CD14-positive monocyte (primary cell): ENCODE measurements at regions of chr12 and their contacts with region 1.

Region 1: GRCh38 chr12:120580787-120581723 is at the start of gene POP5:
- DNase-seq: peak; percentile 96 to 99 (median 96)
- H3K4me3 ChIP-seq: peak within 1 kb of the TSS; percentile 68 to 89 (median 84)
- H3K4me3 Mint-ChIP-seq: peak within 1 kb of the TSS; percentile 91 to 96
- H3K27ac ChIP-seq: peak within 1 kb of the TSS; percentile 36 to 76
- H3K27ac Mint-ChIP-seq: peak within 1 kb of the TSS; percentile 79 to 95 (median 91)
- H3K4me1 ChIP-seq: peaks cover 27 to 42% of the 10 kb centered on the region in 2 donors
- H3K4me1 Mint-ChIP-seq: peaks cover 34% of the 10 kb centered on the region
- H3K27me3 ChIP-seq: peaks cover 3 to 23% of the 10 kb centered on the region in 2 donors
- H3K27me3 Mint-ChIP-seq: peaks cover 23 to 32% (median 25%) of the 10 kb centered on the region in 3 donors
- CTCF ChIP-seq: no peak
- polyA plus RNA-seq, gene POP5: 57.2 to 78.7 (median 61.2) TPM

Region 2: DNA sequence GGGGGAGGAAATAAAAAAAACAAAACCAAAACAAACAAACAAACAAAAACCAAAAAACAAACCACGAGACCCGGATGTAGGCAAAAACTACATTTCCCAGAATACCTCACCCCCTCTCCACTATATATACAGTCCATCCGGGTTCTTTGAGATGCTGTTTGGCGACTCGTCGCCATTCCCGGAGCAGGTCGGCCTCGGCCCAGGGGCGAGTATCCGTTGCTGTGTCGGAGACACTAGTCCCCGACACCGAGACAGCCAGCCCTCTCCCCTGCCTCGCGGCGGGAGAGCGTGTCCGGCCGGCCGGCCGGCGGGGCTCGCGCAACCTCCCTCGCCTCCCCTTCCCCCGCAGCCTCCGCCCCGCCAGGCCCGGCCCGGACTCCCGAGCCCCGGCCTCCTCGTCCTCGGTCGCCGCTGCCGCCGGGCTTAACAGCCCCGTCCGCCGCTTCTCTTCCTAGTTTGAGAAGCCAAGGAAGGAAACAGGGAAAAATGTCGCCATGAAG is 46.8 kb before region 1 on chr12 and contains the start of gene RNF10:
- intact Hi-C with region 1: loop called in 1 of 2 experiments (anchors 5 kb)
- DNase-seq: peak; percentile 83 to 86 (median 83)
- H3K4me3 ChIP-seq: peak within 1 kb of the TSS; percentile 88 to 98 (median 89)
- H3K4me3 Mint-ChIP-seq: peak within 1 kb of the TSS; percentile 90 to 93
- H3K27ac ChIP-seq: peak within 1 kb of the TSS; percentile 70 to 89
- H3K27ac Mint-ChIP-seq: peak within 1 kb of the TSS; percentile 79 to 95 (median 93)
- H3K4me1 ChIP-seq: peaks cover 51 to 58% of the 10 kb centered on the region in 2 donors
- H3K4me1 Mint-ChIP-seq: peaks cover 51% of the 10 kb centered on the region
- H3K27me3 ChIP-seq: no peaks in the 10 kb centered on the region
- H3K27me3 Mint-ChIP-seq: no peaks in the 10 kb centered on the region
- CTCF ChIP-seq: no peak
- polyA plus RNA-seq, gene RNF10: 62.4 to 178 (median 106) TPM

Region 3: DNA sequence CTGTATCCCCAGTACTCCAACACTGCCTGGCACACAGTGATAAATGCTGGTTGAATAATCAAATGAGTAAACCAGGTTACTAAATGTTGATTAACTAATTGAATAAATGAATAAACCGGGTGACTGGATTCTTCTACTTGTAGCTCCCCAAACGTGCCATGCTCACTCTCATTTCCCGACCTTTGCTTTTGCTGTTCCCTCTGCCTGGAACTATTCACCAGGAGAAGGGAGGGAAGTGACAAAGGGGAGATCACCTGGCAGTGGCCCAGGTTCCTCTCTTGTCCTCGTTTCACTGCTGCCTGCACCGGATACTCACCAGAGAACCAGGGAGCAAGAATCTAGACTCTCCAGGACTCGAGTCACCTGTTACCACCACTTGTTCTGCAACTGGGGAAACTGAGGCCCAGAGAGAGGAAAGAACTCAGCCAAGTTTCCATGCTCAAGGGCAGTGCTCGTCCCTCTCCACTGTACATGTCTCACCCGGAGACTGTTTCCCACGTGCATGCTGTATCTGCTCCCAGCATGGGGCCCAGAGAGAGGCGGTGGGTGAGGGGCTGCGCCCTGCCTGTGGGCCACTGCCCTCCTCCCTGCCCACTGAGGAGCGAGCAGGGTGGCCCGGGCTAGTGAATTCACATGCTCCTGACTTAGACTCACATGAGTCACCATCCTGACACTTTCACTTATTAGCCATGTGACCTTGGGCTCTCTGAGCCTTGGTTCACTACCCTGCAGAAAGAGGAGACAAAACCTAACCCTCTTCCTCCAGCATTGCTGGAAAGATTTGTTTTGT is 17.8 kb after region 1 on chr12:
- intact Hi-C with region 1: loop called in 1 of 2 experiments (anchors 1 kb)
- DNase-seq: peak; percentile 71 to 89 (median 83)
- H3K4me3 ChIP-seq: no peak overlapping the region
- H3K4me3 Mint-ChIP-seq: no peak overlapping the region
- H3K27ac ChIP-seq: peak overlapping the region; percentile 19 to 58
- H3K27ac Mint-ChIP-seq: peak overlapping the region in 6 of 7 donors; percentile 10 to 74 (median 50)
- H3K4me1 ChIP-seq: peaks cover 39 to 42% of the 10 kb centered on the region in 2 donors
- H3K4me1 Mint-ChIP-seq: peaks cover 35% of the 10 kb centered on the region
- H3K27me3 ChIP-seq: no peaks in the 10 kb centered on the region
- H3K27me3 Mint-ChIP-seq: peaks cover 0 to 3% (median 2%) of the 10 kb centered on the region in 3 donors
- CTCF ChIP-seq: no peak

Region 4: DNA sequence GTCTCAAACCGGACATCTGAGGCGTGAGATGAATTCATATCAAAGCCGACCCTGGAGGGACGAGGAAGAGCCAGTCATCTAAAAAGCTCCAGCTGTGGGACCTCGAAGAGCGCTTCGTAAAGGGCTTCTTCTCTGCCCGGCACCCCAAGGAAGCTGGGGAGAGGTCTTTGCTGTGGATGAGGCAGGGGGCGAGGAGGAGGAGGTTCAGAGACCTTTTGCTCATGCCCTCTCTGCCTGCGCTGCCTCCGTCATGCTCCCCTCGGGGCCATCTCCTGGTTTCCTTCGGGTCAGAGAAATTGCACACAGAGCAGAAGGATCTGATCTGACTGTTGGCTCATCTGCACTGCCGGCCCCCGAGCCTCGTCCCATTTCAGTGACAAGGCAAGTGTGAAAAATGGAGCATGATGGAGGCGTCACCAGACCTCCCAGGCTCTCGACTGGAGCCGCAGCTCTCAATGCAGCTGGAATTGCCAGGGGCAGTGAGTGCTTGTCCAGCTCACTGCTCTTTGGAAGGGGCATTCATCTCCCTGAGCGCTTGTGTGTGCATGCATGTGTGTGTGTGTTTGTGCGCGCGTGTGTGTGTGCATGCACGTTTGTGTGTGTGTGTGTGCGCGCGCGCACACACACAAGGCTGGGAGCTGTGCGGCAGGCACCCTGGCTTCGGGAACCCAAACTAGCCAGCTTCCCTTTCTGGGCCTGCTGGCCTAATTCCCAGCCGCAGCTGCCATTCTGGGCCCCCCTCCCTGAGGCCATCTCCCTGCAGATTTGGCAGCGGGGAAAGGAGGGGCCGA is 68.6 kb after region 1 on chr12:
- intact Hi-C with region 1: loop called (anchors 2 kb)
- DNase-seq: peak in 1 of 3 donors; percentile 18
- H3K4me3 ChIP-seq: peak overlapping the region; percentile 2 to 69 (median 3)
- H3K4me3 Mint-ChIP-seq: peak overlapping the region; percentile 76 to 93
- H3K27ac ChIP-seq: no peak overlapping the region
- H3K27ac Mint-ChIP-seq: peak overlapping the region in 4 of 7 donors; percentile 5 to 64 (median 26)
- H3K4me1 ChIP-seq: peaks cover 52 to 59% of the 10 kb centered on the region in 2 donors
- H3K4me1 Mint-ChIP-seq: peaks cover 62% of the 10 kb centered on the region
- H3K27me3 ChIP-seq: peaks cover under 1 to 15% of the 10 kb centered on the region in 2 donors
- H3K27me3 Mint-ChIP-seq: peaks cover 22 to 41% (median 26%) of the 10 kb centered on the region in 3 donors
- CTCF ChIP-seq: peak; percentile 74

Region 5: GRCh38 chr12:120669055-120669840 is 88.2 kb after region 1 on chr12:
- intact Hi-C with region 1: no loop called
- DNase-seq: no peak
- H3K4me3 ChIP-seq: no peak overlapping the region
- H3K4me3 Mint-ChIP-seq: peak overlapping the region in 1 of 2 donors; percentile 20
- H3K27ac ChIP-seq: no peak overlapping the region
- H3K27ac Mint-ChIP-seq: no peak overlapping the region
- H3K4me1 ChIP-seq: peaks cover 5 to 6% of the 10 kb centered on the region in 2 donors
- H3K4me1 Mint-ChIP-seq: peaks cover 6% of the 10 kb centered on the region
- H3K27me3 ChIP-seq: no peaks in the 10 kb centered on the region
- H3K27me3 Mint-ChIP-seq: peaks cover 0 to 8% (median 5%) of the 10 kb centered on the region in 3 donors
- CTCF ChIP-seq: no peak

Region 6: GRCh38 chr12:120686690-120687577 is 105.9 kb after region 1 on chr12 and contains the start of gene MLEC:
- intact Hi-C with region 1: loop called in 1 of 2 experiments (anchors 5 kb)
- DNase-seq: peak; percentile 97 to 98 (median 98)
- H3K4me3 ChIP-seq: peak within 1 kb of the TSS; percentile 65 to 92 (median 78)
- H3K4me3 Mint-ChIP-seq: peak within 1 kb of the TSS; percentile 84 to 92
- H3K27ac ChIP-seq: peak within 1 kb of the TSS; percentile 94 to 96
- H3K27ac Mint-ChIP-seq: peak within 1 kb of the TSS; percentile 94 to 99 (median 97)
- H3K4me1 ChIP-seq: peaks cover 47 to 50% of the 10 kb centered on the region in 2 donors
- H3K4me1 Mint-ChIP-seq: peaks cover 59% of the 10 kb centered on the region
- H3K27me3 ChIP-seq: no peaks in the 10 kb centered on the region
- H3K27me3 Mint-ChIP-seq: peaks cover 0 to 2% (median 0%) of the 10 kb centered on the region in 3 donors
- CTCF ChIP-seq: no peak
- polyA plus RNA-seq, gene MLEC: 10.9 to 79.5 (median 65.3) TPM

Region 7: GRCh38 chr12:120710031-120710804 is 129.2 kb after region 1 on chr12 and contains the start of gene UNC119B:
- intact Hi-C with region 1: loop called (anchors 1 to 2 kb)
- DNase-seq: peak; percentile 20 to 35 (median 34)
- H3K4me3 ChIP-seq: peak within 1 kb of the TSS; percentile 66 to 84 (median 69)
- H3K4me3 Mint-ChIP-seq: peak within 1 kb of the TSS; percentile 87 to 90
- H3K27ac ChIP-seq: peak within 1 kb of the TSS in 1 of 2 donors; percentile 54
- H3K27ac Mint-ChIP-seq: peak within 1 kb of the TSS in 6 of 7 donors; percentile 31 to 87 (median 72)
- H3K4me1 ChIP-seq: peaks cover 21 to 22% of the 10 kb centered on the region in 2 donors
- H3K4me1 Mint-ChIP-seq: peaks cover 22% of the 10 kb centered on the region
- H3K27me3 ChIP-seq: no peaks in the 10 kb centered on the region
- H3K27me3 Mint-ChIP-seq: peaks cover 0 to 1% (median 0%) of the 10 kb centered on the region in 3 donors
- CTCF ChIP-seq: no peak
- polyA plus RNA-seq, gene UNC119B: 1.1 to 9.1 (median 2.1) TPM

Region 8: GRCh38 chr12:120761519-120761934 is 180.5 kb after region 1 on chr12:
- intact Hi-C with region 1: no loop called
- DNase-seq: no peak
- H3K4me3 ChIP-seq: no peak overlapping the region
- H3K4me3 Mint-ChIP-seq: no peak overlapping the region
- H3K27ac ChIP-seq: peak overlapping the region in 1 of 2 donors; percentile 24
- H3K27ac Mint-ChIP-seq: peak overlapping the region in 2 of 7 donors; percentile 51 to 68
- H3K4me1 ChIP-seq: no peaks in the 10 kb centered on the region
- H3K4me1 Mint-ChIP-seq: no peaks in the 10 kb centered on the region
- H3K27me3 ChIP-seq: no peaks in the 10 kb centered on the region
- H3K27me3 Mint-ChIP-seq: peaks cover 0 to 2% (median 0%) of the 10 kb centered on the region in 3 donors
- CTCF ChIP-seq: no peak

Region 9: DNA sequence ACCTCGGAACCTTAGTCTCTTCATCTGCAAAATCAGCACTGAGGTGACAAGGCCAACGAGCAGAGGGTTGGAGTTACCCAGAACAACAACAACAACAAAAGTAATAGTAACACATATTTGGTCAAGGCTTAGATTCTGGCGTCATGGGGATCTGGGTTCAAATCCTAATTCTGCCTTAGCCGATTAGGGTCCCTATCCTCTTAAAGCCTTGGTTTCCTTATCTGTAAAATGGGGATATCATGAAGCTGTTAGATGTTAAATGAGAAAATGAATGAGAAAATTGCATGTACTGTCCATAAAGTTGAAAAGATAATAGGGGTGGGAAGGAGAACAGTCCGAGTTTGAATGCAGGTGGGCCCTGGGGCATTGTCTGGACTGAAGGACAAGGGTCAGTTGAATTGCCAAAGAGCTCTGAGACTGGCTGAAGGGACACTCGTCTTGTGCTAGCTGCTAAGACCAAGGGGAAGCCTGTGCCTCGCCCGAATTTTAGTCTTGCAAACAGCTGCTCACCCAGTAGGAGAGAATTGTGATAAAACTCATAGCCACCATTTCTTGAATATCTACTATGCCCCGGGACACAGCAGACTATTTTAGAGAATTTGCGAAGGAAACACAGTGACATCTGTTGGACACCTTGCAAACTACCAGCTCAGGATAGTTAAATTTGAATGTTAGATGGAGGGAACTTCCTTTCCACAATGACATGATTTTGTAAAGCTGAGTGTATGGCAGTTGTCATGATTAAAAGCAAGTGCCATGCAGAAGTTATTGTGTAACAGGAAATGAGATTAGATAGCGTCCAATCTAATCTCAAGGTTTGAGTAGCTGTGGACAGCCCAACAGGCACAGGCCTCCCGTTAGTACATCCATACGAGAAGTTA is 390.5 kb after region 1 on chr12:
- intact Hi-C with region 1: loop called in 1 of 2 experiments (anchors 5 kb)
- DNase-seq: peak; percentile 44 to 65 (median 62)
- H3K4me3 ChIP-seq: no peak overlapping the region
- H3K4me3 Mint-ChIP-seq: peak overlapping the region in 1 of 2 donors; percentile 35
- H3K27ac ChIP-seq: no peak overlapping the region
- H3K27ac Mint-ChIP-seq: peak overlapping the region in 2 of 7 donors; percentile 1 to 61
- H3K4me1 ChIP-seq: peaks cover 10 to 14% of the 10 kb centered on the region in 2 donors
- H3K4me1 Mint-ChIP-seq: peaks cover 14% of the 10 kb centered on the region
- H3K27me3 ChIP-seq: no peaks in the 10 kb centered on the region
- H3K27me3 Mint-ChIP-seq: peaks cover 0 to 3% (median 0%) of the 10 kb centered on the region in 3 donors
- CTCF ChIP-seq: peak; percentile 79